ENCODE measurements at regions of chr14 and their contacts with region 1.

Region 1: DNA sequence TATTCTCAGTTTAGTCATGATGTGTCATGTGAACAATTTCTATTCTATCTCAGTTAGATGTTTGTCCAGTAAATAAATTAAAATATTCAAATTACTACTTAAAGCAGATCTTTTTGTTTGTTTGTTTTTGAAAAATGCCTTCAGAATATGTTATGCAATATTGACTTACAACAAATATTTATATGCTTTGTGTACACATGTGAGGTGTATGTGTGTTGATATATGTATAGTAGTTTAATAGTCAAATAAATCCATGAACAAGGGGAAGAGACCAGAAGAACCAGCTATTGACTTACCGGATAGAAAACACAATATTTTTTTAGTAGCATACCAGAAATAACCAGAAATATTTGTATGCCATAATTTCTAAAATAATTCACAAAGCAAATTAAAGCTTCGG is 1312.1 kb upstream of the SEL1L start:
- DNase-seq: no peak
- H3K4me3 ChIP-seq: no peak overlapping the region
- CTCF ChIP-seq: no peak

Region 2: GRCh38 chr14:82731526-82731925 is 114.2 kb before region 1 on chr14:
- in situ Hi-C with region 1: no loop called
- DNase-seq: no peak
- H3K4me3 ChIP-seq: no peak overlapping the region
- CTCF ChIP-seq: no peak

Region 3: DNA sequence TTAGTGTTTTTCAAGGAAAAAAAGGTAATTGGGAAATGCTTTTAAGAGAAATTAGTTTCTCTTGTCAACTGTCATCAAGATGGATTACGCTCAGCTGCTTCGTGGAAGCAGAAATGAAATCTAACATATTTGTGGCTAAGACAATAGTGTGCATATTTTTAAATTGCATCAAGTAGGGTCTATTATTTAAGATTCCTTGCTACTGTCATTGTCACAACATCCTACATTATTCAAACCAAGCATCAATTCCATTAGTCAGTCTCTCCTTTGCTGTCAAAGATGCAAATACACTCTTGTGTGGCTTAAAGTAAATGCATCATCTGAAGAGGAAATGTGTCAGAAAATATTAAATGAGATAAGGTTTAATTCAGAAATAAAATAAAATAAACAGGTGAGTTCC is 34.5 kb before region 1 on chr14:
- in situ Hi-C with region 1: no loop called
- DNase-seq: no peak
- H3K4me3 ChIP-seq: no peak overlapping the region
- CTCF ChIP-seq: no peak

Region 4: GRCh38 chr14:82889701-82890100 is 43.9 kb after region 1 on chr14:
- in situ Hi-C with region 1: loop called (anchors 5 kb)
- DNase-seq: no peak
- H3K4me3 ChIP-seq: no peak overlapping the region
- CTCF ChIP-seq: no peak

Measured in astrocyte of the cerebellum (primary cell).